Prostate gland (tissue), 2 donors: ENCODE measurements at regions of chr5 and their contacts with region 1.

Region 1: GRCh38 chr5:141564216-141564692 is 54.5 kb downstream of the DIAPH1 start:
- DNase-seq: peak; percentile 76
- H3K4me3 ChIP-seq: no peak overlapping the region
- H3K27ac ChIP-seq: peak overlapping the region; percentile 18 to 57
- H3K4me1 ChIP-seq: peaks cover 4% of the 10 kb centered on the region
- H3K27me3 ChIP-seq: no peaks in the 10 kb centered on the region
- CTCF ChIP-seq: peak; percentile 87 to 99 (median 98)
- POLR2A ChIP-seq: no peak

Region 2: GRCh38 chr5:140977003-140977402 is 587.3 kb before region 1 on chr5:
- intact Hi-C with region 1: no loop called
- DNase-seq: no peak
- H3K4me3 ChIP-seq: no peak overlapping the region
- H3K27ac ChIP-seq: no peak overlapping the region
- H3K4me1 ChIP-seq: no peaks in the 10 kb centered on the region
- H3K27me3 ChIP-seq: no peaks in the 10 kb centered on the region
- CTCF ChIP-seq: no peak
- POLR2A ChIP-seq: no peak

Region 3: DNA sequence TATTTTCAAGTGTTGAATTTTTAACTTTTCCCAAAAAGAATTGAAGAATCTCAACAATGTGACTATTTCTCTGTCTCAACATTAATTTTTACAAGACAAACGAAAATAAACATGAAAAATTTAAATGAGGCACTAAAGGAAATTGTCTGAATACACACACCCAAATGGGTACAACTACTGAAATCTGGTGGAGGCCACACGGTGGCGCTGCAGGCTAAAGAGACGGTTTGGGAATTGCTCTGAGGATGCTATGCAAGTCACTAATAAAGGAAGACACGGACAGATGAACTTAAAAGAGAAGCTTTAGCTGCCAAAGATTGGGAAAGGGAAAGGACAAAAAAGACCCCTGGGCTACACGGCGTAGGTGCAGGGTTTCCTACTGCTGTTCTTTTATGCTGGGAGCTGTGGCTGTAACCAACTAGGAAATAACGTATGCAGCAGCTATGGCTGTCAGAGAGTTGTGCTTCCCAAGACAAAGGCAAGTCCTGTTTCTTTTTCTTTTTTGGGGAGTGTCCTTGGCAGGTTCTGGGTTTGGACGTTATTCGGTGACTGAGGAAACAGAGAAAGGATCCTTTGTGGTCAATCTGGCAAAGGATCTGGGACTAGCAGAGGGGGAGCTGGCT is 372.0 kb before region 1 on chr5 and contains the start of gene PCDHB10:
- intact Hi-C with region 1: loop called (anchors 10 kb)
- DNase-seq: no peak
- H3K4me3 ChIP-seq: no peak within 1 kb of the TSS
- H3K27ac ChIP-seq: no peak within 1 kb of the TSS
- H3K4me1 ChIP-seq: no peaks in the 10 kb centered on the region
- H3K27me3 ChIP-seq: no peaks in the 10 kb centered on the region
- CTCF ChIP-seq: peak in 1 of 4 experiments; percentile 10
- POLR2A ChIP-seq: no peak
- total RNA-seq, gene PCDHB10: 0.96 to 3.5 TPM

Region 4: DNA sequence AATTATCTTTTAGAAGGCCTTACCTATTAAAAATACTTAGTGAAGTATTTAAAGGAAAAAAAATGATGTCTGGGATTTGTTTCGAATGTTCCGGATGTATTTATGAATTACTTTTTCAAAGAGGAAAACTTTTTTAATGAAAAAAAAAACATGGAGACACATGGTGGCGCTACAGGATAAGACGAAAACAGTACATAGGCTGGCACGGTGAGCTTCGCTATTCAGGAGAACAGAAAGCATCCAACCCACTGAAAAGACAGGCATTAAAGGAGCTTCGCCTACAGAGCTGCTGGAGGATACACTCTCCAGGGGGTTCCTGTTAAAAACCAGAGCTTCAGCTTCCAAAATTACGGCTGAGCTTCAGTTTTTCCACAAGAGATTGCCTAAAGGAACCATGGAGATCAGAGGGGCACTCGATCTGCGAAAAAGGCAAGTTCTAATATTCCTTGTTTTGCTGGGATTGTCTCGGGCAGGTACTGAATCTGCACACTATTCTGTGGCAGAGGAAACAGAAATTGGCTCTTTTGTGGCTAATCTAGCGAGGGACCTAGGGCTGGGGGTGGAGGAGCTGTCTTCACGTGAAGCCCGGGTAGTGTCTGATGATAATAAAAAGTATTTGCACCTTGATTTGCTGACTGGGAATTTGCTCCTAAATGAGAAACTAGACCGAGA is 341.0 kb before region 1 on chr5 and contains the start of gene PCDHB14:
- intact Hi-C with region 1: loop called (anchors 10 kb)
- DNase-seq: no peak
- H3K4me3 ChIP-seq: peak within 1 kb of the TSS in 1 of 2 donors; percentile 6
- H3K27ac ChIP-seq: no peak within 1 kb of the TSS
- H3K4me1 ChIP-seq: no peaks in the 10 kb centered on the region
- H3K27me3 ChIP-seq: no peaks in the 10 kb centered on the region
- CTCF ChIP-seq: no peak
- POLR2A ChIP-seq: no peak
- total RNA-seq, gene PCDHB14: 4.6 to 6.7 TPM

Region 5: DNA sequence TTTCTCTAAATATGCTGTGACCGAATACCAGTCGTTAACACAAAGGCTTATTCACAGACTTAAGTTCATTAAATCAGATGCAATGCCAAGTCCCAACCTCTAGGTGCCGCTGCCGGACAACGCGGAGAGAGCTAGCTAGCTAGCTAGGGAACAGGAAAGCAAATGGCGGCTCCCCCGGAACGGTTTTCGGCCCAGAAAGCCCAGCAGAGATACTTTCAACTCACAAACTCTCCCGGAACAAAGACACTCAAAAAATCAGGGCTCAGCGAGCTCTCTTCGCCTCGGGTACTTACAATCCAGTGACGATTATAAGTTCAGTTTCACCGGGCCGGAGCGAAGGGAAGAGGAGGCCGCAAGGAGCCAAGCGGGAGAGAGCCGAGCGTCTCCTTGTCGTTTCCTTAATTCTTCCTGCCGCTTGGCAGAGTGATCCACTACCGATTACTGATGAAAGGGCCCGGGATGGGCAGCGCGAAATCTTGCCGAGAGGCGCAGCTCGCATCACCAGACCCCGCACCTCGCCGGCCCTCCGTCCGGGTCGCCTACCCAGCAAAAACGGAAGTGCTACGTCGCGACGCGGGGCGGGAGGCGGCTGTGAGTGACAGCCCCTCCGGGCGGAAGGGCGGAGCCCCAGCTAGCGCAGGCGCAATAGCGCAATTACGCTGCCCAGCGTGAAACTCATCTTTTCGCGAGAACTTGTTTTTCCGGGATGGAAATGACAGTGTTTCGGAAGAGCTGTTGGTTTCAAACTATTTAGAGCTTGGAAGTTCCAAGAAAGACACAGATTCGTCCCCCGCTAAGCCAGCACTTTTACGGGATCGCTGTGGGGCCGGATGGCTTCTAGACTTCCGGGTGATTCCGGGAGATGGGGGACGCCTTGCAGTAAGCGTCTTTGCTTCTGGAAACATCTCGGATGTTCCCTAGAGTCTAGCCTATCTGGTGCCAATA is 243.8 kb before region 1 on chr5 and contains the start of gene TAF7:
- intact Hi-C with region 1: loop called (anchors 5 kb)
- DNase-seq: peak; percentile 80
- H3K4me3 ChIP-seq: peak within 1 kb of the TSS; percentile 50 to 77
- H3K27ac ChIP-seq: peak within 1 kb of the TSS; percentile 94 to 96
- H3K4me1 ChIP-seq: no peaks in the 10 kb centered on the region
- H3K27me3 ChIP-seq: no peaks in the 10 kb centered on the region
- CTCF ChIP-seq: peak; percentile 55 to 78 (median 76)
- POLR2A ChIP-seq: peak; percentile 77
- total RNA-seq, gene TAF7: 59.3 to 85.9 TPM

Region 6: GRCh38 chr5:141623186-141623585 is 58.9 kb after region 1 on chr5:
- intact Hi-C with region 1: no loop called
- DNase-seq: no peak
- H3K4me3 ChIP-seq: no peak overlapping the region
- H3K27ac ChIP-seq: no peak overlapping the region
- H3K4me1 ChIP-seq: no peaks in the 10 kb centered on the region
- H3K27me3 ChIP-seq: no peaks in the 10 kb centered on the region
- CTCF ChIP-seq: no peak
- POLR2A ChIP-seq: no peak